CD4-positive, alpha-beta memory T cell (primary cell): ENCODE measurements at regions of chr16 and their contacts with region 1.

Region 1: GRCh38 chr16:27449434-27450195 is 47.6 kb downstream of the IL21R start:
- DNase-seq: peak; percentile 72 to 94 (median 80)
- H3K4me3 ChIP-seq: no peak overlapping the region
- H3K4me3 Mint-ChIP-seq: peak overlapping the region in 7 of 8 donors; percentile 50 to 88 (median 68)
- H3K27ac ChIP-seq: peak overlapping the region; percentile 53
- H3K27ac Mint-ChIP-seq: peak overlapping the region; percentile 80 to 99 (median 94)
- H3K4me1 ChIP-seq: peaks cover 74% of the 10 kb centered on the region
- H3K4me1 Mint-ChIP-seq: peaks cover 44 to 89% (median 70%) of the 10 kb centered on the region in 4 donors
- H3K27me3 ChIP-seq: no peaks in the 10 kb centered on the region
- H3K27me3 Mint-ChIP-seq: no peaks in the 10 kb centered on the region

Region 2: GRCh38 chr16:27408012-27408601 is 41.5 kb before region 1 on chr16:
- CTCF ChIA-PET with region 1: interaction called, 5 read pairs
- POLR2A ChIA-PET with region 1: interaction called, 26 read pairs
- intact Hi-C with region 1: no loop called
- DNase-seq: peak in 1 of 5 donors; percentile 68
- H3K4me3 ChIP-seq: peak overlapping the region in 1 of 2 donors; percentile 0
- H3K4me3 Mint-ChIP-seq: peak overlapping the region; percentile 59 to 99 (median 90)
- H3K27ac ChIP-seq: peak overlapping the region; percentile 66
- H3K27ac Mint-ChIP-seq: peak overlapping the region; percentile 85 to 97 (median 90)
- H3K4me1 ChIP-seq: peaks cover 85% of the 10 kb centered on the region
- H3K4me1 Mint-ChIP-seq: peaks cover 54 to 89% (median 67%) of the 10 kb centered on the region in 4 donors
- H3K27me3 ChIP-seq: no peaks in the 10 kb centered on the region
- H3K27me3 Mint-ChIP-seq: no peaks in the 10 kb centered on the region

Region 3: GRCh38 chr16:27426423-27427408 is 22.9 kb before region 1 on chr16:
- CTCF ChIA-PET with region 1: no interaction called
- POLR2A ChIA-PET with region 1: interaction called, 10 read pairs
- intact Hi-C with region 1: no loop called
- DNase-seq: peak; percentile 53 to 87 (median 62)
- H3K4me3 ChIP-seq: no peak overlapping the region
- H3K4me3 Mint-ChIP-seq: peak overlapping the region in 5 of 8 donors; percentile 0 to 70 (median 39)
- H3K27ac ChIP-seq: peak overlapping the region; percentile 38
- H3K27ac Mint-ChIP-seq: peak overlapping the region; percentile 62 to 93 (median 90)
- H3K4me1 ChIP-seq: peaks cover 33% of the 10 kb centered on the region
- H3K4me1 Mint-ChIP-seq: peaks cover 20 to 44% (median 31%) of the 10 kb centered on the region in 4 donors
- H3K27me3 ChIP-seq: no peaks in the 10 kb centered on the region
- H3K27me3 Mint-ChIP-seq: no peaks in the 10 kb centered on the region

Region 4: GRCh38 chr16:27461483-27462171 is 12.0 kb after region 1 on chr16:
- CTCF ChIA-PET with region 1: interaction called, 21 read pairs
- POLR2A ChIA-PET with region 1: interaction called, 24 read pairs
- intact Hi-C with region 1: no loop called
- DNase-seq: no peak
- H3K4me3 ChIP-seq: no peak overlapping the region
- H3K4me3 Mint-ChIP-seq: peak overlapping the region in 1 of 8 donors; percentile 57
- H3K27ac ChIP-seq: no peak overlapping the region
- H3K27ac Mint-ChIP-seq: peak overlapping the region in 5 of 7 donors; percentile 12 to 81 (median 77)
- H3K4me1 ChIP-seq: peaks cover 61% of the 10 kb centered on the region
- H3K4me1 Mint-ChIP-seq: peaks cover 34 to 67% (median 50%) of the 10 kb centered on the region in 4 donors
- H3K27me3 ChIP-seq: no peaks in the 10 kb centered on the region
- H3K27me3 Mint-ChIP-seq: no peaks in the 10 kb centered on the region

Region 5: DNA sequence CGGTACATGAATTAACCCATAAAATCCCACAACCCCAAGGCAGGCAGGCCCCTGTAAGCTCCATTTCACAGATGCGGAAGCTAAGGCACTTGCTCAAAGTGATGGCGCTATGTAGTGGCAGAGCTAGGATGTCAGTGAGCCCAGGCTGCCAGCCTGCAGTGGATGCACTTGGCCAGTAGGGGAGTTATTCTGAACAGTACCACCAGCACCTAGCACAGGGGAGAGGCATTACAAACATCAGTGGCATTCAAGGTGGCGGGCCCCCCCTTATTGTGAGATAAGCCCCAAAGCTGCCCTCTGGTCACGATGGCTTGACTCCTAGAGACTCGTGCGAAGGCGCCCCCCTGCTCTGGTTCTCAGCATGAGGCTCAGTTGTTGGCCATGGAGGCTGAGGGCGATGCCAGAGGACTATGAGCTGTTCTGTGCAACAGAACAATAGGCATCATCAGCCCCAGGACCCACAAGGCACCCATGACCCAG is 66.3 kb after region 1 on chr16:
- CTCF ChIA-PET with region 1: no interaction called
- POLR2A ChIA-PET with region 1: no interaction called
- intact Hi-C with region 1: no loop called
- DNase-seq: no peak
- H3K4me3 ChIP-seq: no peak overlapping the region
- H3K4me3 Mint-ChIP-seq: no peak overlapping the region
- H3K27ac ChIP-seq: no peak overlapping the region
- H3K27ac Mint-ChIP-seq: peak overlapping the region in 1 of 7 donors; percentile 31
- H3K4me1 ChIP-seq: no peaks in the 10 kb centered on the region
- H3K4me1 Mint-ChIP-seq: peaks cover 0 to 4% (median 2%) of the 10 kb centered on the region in 4 donors
- H3K27me3 ChIP-seq: no peaks in the 10 kb centered on the region
- H3K27me3 Mint-ChIP-seq: no peaks in the 10 kb centered on the region

Region 6: DNA sequence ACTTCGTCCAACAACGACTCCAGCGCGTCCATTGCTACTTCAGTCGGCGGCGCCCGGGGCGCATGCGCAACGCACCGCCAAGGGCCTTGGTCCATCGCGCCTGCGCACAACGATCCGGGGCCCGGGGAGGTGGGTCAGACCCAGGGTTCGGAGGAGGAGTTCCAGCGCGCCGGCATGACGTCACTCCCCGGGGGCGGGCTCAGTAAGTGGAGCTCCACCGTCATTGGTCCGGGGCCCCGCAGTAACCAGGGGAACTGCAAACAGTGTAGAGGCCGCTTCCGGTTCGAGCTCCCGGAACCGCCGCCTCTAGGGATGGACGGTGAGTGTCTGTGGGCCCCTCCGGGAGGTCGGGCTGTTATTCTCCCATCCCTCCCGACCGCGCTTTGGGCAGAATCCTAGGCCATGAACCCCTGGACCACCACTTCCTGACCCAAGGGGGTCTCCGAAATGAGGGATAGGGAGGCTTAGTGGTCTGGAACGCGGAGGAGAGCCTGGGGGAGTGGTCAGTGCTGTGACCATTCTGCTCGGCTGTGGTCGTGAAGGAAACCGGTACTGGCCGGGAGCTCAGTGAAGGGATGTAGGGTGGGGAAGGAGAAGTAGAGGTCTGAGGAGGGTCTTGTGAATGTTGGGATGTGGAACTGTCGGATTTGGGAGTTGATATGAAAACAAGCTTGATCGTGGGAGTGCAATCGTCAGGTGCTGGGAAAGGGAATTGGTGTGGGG is 100.4 kb after region 1 on chr16 and contains the starts of genes GTF3C1 and KATNIP:
- CTCF ChIA-PET with region 1: no interaction called
- POLR2A ChIA-PET with region 1: no interaction called
- intact Hi-C with region 1: loop called (anchors 1 kb)
- DNase-seq: peak; percentile 100
- H3K4me3 ChIP-seq: peak within 1 kb of the TSS; percentile 88 to 100
- H3K4me3 Mint-ChIP-seq: peak within 1 kb of the TSS; percentile 94 to 100 (median 98)
- H3K27ac ChIP-seq: peak within 1 kb of the TSS; percentile 84
- H3K27ac Mint-ChIP-seq: peak within 1 kb of the TSS; percentile 97 to 100 (median 99)
- H3K4me1 ChIP-seq: peaks cover 40% of the 10 kb centered on the region
- H3K4me1 Mint-ChIP-seq: peaks cover 23 to 51% (median 37%) of the 10 kb centered on the region in 4 donors
- H3K27me3 ChIP-seq: no peaks in the 10 kb centered on the region
- H3K27me3 Mint-ChIP-seq: no peaks in the 10 kb centered on the region
- total RNA-seq, gene GTF3C1: 48.9 to 53.1 TPM
- total RNA-seq, gene KATNIP: 18.4 to 22.9 TPM